ENCODE measurements at regions of chr2 and their contacts with region 1.

Region 1: DNA sequence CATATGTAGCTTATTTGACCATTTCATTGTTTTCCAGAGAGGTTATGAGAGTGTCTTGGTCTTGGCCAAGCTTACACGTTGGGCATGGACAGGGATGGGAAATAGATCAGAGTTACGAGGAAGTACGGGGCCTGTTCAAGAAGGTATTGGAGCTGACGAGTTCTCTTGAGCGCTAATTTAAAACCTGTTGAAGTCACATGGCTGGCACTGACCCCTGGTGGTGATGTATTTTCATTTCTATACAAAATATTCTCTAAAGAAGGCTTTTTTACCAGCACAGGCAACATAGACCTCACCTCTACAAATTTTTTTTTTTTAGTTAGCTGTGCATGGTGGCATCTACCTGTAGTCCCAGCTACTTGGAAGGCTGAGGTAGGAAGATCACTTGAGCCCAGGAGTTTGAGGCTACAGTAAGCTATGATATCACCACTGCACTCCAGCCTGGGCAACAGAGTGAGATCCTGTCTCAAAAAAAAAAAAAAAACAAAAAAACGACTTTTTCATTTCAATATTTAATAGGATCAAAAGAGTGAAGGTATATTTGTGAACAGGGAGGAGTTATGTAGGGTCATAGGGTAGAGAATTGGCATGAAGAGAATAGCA is 19.6 kb downstream of the UGP2 start:
- DNase-seq: peak; percentile 56
- H3K4me3 Mint-ChIP-seq: no peak overlapping the region
- H3K27ac Mint-ChIP-seq: no peak overlapping the region
- H3K4me1 Mint-ChIP-seq: peaks cover 44% of the 10 kb centered on the region
- H3K27me3 Mint-ChIP-seq: no peaks in the 10 kb centered on the region

Region 2: DNA sequence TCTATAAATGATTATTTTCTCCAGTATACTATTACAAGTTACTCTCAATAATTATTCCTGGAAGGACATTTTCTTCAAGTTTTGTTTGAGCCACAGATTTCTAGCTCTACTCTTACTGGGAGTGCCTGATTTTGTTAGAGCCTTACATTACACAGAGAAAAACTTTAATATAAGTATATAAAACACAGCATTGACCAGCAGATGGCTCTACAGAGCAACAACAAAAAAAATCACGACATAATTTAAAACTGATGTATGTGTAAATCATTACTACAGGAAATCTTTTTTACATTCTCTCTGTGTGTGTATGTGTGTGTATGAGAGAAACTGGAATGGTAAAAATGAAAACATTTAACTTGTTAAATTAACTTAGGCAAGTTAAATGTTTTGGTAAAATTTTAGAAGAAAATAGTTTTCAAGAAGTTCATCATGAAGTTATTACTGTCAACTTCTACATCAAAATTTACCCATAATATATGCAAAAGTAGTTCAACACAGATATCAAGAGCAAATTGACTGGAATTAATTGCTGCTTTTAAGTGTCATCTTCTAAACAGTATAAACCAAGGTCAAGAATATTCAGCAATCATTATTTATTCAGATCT is 169.2 kb before region 1 on chr2:
- CTCF ChIA-PET with region 1: interaction called, 56 read pairs
- POLR2A ChIA-PET with region 1: no interaction called
- intact Hi-C with region 1: loop called (anchors 1 kb)
- DNase-seq: no peak
- H3K4me3 Mint-ChIP-seq: no peak overlapping the region
- H3K27ac Mint-ChIP-seq: no peak overlapping the region
- H3K4me1 Mint-ChIP-seq: no peaks in the 10 kb centered on the region
- H3K27me3 Mint-ChIP-seq: no peaks in the 10 kb centered on the region

Region 3: DNA sequence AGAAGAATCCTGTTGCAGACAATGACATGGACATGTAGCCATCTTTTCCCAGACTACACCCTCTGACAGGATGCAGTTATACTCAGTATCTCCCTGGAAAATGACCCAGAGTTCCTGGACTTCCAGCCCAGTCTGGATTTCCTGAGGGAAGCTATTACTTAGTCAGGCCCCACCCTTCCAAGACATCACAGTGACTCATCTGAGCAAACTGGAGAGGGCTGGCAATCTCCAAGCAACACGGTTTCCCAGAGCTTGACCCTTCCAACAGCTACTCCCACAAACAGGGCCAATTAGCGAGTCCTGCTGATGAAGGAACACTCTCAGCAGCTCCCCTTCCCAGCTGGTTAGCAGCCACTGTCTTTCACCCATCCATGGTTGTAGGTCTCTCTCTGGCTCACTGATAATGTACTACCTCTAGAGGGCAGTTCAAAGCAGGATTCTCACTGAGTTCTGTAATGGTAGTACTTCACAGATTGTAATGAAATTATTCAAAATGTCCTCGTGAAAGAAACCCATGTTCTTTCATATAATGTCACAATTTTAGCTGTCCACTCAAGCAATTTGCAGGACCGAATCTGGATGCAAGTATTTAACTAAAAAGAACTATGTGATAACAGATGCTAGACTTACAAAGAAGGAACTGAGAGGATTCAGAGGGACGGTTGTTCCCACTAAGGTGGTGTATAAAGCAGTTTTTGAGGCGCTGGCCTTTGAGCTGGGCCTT is 162.3 kb before region 1 on chr2:
- CTCF ChIA-PET with region 1: interaction called, 56 read pairs
- POLR2A ChIA-PET with region 1: no interaction called
- intact Hi-C with region 1: no loop called
- DNase-seq: no peak
- H3K4me3 Mint-ChIP-seq: no peak overlapping the region
- H3K27ac Mint-ChIP-seq: no peak overlapping the region
- H3K4me1 Mint-ChIP-seq: no peaks in the 10 kb centered on the region
- H3K27me3 Mint-ChIP-seq: no peaks in the 10 kb centered on the region

Region 4: DNA sequence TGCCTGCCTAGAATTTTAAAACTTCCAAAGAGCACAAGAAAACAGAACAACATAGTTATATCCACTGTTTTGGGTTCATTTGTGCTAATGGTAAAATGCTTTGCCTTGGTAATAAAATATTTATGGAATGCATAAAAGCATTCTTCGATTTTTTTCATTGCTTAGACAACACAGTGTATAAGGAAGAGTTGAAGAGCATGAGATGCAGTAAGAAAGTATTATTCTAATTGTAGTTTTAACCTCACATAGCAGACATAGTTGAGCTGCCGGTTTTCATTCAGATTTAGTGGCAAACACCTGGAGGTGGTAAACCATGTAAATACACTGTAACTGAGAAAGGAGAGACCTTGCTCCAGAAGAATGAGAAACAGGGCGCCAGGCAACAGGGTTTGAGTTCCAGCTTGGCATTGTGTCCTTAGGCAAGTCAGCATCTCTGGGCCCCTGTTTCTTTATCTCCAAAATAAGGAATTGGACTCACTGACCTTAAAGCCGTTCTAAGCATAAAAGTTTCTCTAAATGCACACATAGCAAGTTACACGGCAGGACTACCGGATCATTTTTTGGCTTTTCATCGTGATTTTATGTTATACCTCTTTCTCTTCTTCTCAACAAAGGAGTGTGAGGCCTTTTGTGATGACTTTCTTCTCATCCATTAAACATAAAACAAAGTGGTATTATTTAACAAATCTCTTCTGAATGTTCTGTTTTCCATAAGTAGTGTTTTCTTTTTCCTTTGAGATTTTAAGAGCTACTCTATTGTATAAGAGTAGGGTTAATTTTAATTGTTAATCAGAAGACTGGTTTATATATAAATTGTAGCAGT is 11.7 kb before region 1 on chr2:
- CTCF ChIA-PET with region 1: interaction called, 41 read pairs
- POLR2A ChIA-PET with region 1: interaction called, 3 read pairs
- intact Hi-C with region 1: no loop called
- DNase-seq: no peak
- H3K4me3 Mint-ChIP-seq: no peak overlapping the region
- H3K27ac Mint-ChIP-seq: no peak overlapping the region
- H3K4me1 Mint-ChIP-seq: peaks cover 83% of the 10 kb centered on the region
- H3K27me3 Mint-ChIP-seq: no peaks in the 10 kb centered on the region

Region 5: DNA sequence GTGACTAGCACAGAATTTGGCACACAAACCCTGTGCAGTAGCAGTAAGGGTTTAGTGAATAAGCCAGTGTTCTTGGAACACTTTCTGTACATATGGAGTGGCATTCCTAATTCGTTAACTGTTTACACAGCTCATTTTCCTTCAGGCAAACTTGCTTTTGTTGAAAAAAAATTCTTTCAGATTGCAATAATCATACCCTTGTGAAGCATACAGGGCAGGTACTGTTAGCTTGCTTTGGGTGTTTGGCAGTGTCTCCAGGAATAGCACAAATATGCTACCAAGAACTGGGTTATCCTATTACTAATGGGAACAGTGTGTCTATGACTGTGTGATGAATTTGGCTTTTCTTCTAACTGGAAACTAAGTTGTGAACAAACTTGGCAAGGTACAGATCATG is 13.8 kb after region 1 on chr2:
- CTCF ChIA-PET with region 1: interaction called, 12 read pairs
- POLR2A ChIA-PET with region 1: no interaction called
- intact Hi-C with region 1: no loop called
- DNase-seq: no peak
- H3K4me3 Mint-ChIP-seq: no peak overlapping the region
- H3K27ac Mint-ChIP-seq: no peak overlapping the region
- H3K4me1 Mint-ChIP-seq: peaks cover 25% of the 10 kb centered on the region
- H3K27me3 Mint-ChIP-seq: no peaks in the 10 kb centered on the region

Region 6: DNA sequence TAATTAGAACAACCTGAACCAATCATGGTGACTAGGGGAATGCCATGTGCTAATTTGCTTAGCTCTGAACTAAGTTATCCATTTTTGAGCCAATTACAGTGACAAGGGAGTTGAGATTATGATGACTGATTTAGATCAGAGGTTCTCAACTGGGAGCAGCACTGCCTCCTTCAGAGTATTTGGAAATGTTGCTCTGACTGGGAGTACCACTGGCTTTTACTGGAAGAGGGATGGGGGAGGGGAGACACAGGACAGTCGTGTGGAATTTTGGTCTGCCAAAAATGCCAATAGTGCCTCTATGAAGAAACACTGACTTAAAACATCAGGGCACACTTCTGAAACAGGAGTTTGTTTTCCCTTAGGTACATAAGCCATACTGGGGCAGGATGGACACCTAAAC is 206.0 kb after region 1 on chr2:
- CTCF ChIA-PET with region 1: no interaction called
- POLR2A ChIA-PET with region 1: no interaction called
- intact Hi-C with region 1: no loop called
- DNase-seq: no peak
- H3K4me3 Mint-ChIP-seq: no peak overlapping the region
- H3K27ac Mint-ChIP-seq: no peak overlapping the region
- H3K4me1 Mint-ChIP-seq: peaks cover 29% of the 10 kb centered on the region
- H3K27me3 Mint-ChIP-seq: no peaks in the 10 kb centered on the region

Measured in activated CD4-positive, alpha-beta memory T cell treated with anti-CD3 and anti-CD28 coated beads for 36 hours (primary cell).